Activated CD8-positive, alpha-beta memory T cell treated with anti-CD3 and anti-CD28 coated beads, Interleukin-2, amount 10 ng/mL, durations not matched to agents 7 days and 5 days (primary cell): ENCODE measurements at regions of chr11 and their contacts with region 1.

Region 1: GRCh38 chr11:59142530-59143507 is at the start of gene FAM111A:
- DNase-seq: peak; percentile 95
- ATAC-seq: peak; percentile 93
- H3K4me3 Mint-ChIP-seq: peak within 1 kb of the TSS; percentile 96
- H3K27ac Mint-ChIP-seq: peak within 1 kb of the TSS; percentile 97
- H3K4me1 Mint-ChIP-seq: peaks cover 52% of the 10 kb centered on the region
- H3K27me3 Mint-ChIP-seq: no peaks in the 10 kb centered on the region
- total RNA-seq, gene FAM111A: 136 to 152 TPM

Region 2: GRCh38 chr11:59053387-59053786 is 89.4 kb before region 1 on chr11:
- CTCF ChIA-PET with region 1: interaction called, 12 read pairs
- DNase-seq: peak; percentile 81
- ATAC-seq: peak; percentile 71
- H3K4me3 Mint-ChIP-seq: no peak overlapping the region
- H3K27ac Mint-ChIP-seq: no peak overlapping the region
- H3K4me1 Mint-ChIP-seq: peaks cover 4% of the 10 kb centered on the region
- H3K27me3 Mint-ChIP-seq: peaks cover 36% of the 10 kb centered on the region

Region 3: DNA sequence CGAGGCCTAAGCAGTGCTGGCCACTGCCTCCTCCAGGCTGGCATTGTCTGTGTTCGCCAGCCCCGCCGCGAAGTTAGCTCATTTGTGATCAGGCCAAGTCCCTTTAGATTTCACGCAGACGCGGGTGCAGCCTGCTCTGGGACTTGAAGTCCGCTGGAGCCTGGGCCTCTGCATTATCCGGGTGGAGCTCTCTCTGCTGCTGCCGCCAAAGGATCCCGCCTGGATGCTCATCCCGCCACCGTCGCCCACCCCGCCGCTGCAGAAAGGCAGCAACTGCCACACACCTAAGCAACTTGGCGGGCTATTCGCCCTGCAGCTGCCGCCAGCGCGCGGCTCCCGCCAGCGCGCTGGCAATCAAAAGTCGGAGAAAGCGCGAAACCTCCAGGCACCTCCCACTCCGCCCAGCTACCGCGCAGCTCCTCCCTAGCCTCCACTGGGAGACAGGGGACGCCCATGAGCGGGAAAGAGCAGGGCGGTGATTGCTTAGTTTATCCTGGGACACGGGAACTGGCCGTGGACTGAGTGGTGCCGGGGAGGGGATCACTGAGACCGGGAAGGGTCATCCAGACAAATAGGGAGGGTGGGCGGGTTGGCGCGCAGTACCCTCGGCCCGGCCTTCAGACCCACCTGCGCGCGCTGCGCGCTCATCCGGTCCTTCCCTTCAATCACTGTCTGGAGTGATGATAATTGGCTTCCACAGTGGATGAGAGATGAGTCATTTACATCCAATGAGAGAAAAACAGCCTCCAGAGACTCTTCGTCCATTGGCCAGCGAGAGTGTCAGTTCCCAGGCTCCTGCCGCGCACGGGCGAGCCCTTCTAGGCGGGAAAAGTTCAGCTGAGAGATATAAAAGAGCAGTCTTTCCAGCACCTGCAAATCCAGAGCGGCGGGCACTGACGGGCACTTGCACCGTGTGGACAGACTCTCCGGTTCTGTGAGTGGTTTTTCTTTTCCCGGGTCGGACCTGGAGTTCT is 36.2 kb before region 1 on chr11 and contains the start of gene FAM111B:
- CTCF ChIA-PET with region 1: interaction called, 20 read pairs
- DNase-seq: peak; percentile 89
- ATAC-seq: peak; percentile 93
- H3K4me3 Mint-ChIP-seq: peak within 1 kb of the TSS; percentile 81
- H3K27ac Mint-ChIP-seq: peak within 1 kb of the TSS; percentile 80
- H3K4me1 Mint-ChIP-seq: peaks cover 66% of the 10 kb centered on the region
- H3K27me3 Mint-ChIP-seq: peaks cover 6% of the 10 kb centered on the region
- total RNA-seq, gene FAM111B: 42.7 to 46.5 TPM